Breast epithelium (tissue), 4 donors: ENCODE measurements at regions of chr4 and their contacts with region 1.

Region 1: DNA sequence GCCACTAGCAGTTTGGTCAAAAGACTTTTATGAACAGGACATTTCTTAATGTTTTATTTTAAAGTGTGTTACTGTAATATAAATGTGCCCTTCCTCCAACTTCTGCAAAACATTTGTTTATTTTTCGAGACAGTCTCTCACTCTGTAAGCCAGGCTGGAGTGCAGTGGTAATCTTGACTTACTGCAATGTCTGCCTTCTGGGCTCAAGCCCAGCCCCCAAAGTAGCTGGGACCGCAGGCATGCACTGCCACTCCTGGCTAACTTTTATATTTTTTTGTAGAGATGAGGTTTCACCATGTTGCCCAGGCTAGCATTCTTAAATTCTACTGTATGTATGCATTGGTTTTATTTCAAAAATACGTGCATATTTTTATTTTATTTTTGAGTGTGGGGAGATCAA is 1201.9 kb downstream of the STIM2 start:
- DNase-seq: no peak
- H3K4me3 ChIP-seq: no peak overlapping the region
- H3K27ac ChIP-seq: no peak overlapping the region
- H3K4me1 ChIP-seq: no peaks in the 10 kb centered on the region
- H3K27me3 ChIP-seq: no peaks in the 10 kb centered on the region
- CTCF ChIP-seq: no peak
- POLR2A ChIP-seq: no peak

Region 2: GRCh38 chr4:27616166-27616565 is 446.4 kb before region 1 on chr4:
- intact Hi-C with region 1: no loop called
- DNase-seq: no peak
- H3K4me3 ChIP-seq: no peak overlapping the region
- H3K27ac ChIP-seq: no peak overlapping the region
- H3K4me1 ChIP-seq: no peaks in the 10 kb centered on the region
- H3K27me3 ChIP-seq: no peaks in the 10 kb centered on the region
- CTCF ChIP-seq: no peak
- POLR2A ChIP-seq: no peak

Region 3: GRCh38 chr4:27692158-27692557 is 370.4 kb before region 1 on chr4:
- intact Hi-C with region 1: loop called (anchors 5 kb)
- DNase-seq: no peak
- H3K4me3 ChIP-seq: no peak overlapping the region
- H3K27ac ChIP-seq: no peak overlapping the region
- H3K4me1 ChIP-seq: no peaks in the 10 kb centered on the region
- H3K27me3 ChIP-seq: no peaks in the 10 kb centered on the region
- CTCF ChIP-seq: peak in 1 of 3 donors; percentile 20
- POLR2A ChIP-seq: no peak

Region 4: DNA sequence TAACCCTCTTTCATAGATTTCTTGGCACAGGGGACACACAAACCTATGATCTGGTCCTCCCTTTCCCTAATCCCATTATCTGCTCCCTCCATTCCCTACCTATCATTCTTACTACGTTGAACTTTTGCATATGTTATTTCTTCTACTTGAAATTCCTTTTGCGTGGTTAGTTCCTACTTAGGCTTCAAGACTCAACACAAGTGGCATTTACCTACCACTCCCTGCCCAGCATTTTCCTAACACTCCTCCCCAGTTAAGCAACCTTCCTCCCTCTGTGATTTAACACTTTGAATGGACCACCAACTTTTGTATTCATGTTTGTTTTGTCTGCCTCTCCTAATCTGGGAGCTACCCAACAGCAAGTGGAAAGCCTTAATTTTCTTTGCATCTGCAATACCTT is 88.2 kb before region 1 on chr4:
- intact Hi-C with region 1: no loop called
- DNase-seq: no peak
- H3K4me3 ChIP-seq: no peak overlapping the region
- H3K27ac ChIP-seq: no peak overlapping the region
- H3K4me1 ChIP-seq: no peaks in the 10 kb centered on the region
- H3K27me3 ChIP-seq: no peaks in the 10 kb centered on the region
- CTCF ChIP-seq: no peak
- POLR2A ChIP-seq: no peak

Region 5: GRCh38 chr4:28913466-28913865 is 850.9 kb after region 1 on chr4:
- intact Hi-C with region 1: no loop called
- DNase-seq: no peak
- H3K4me3 ChIP-seq: no peak overlapping the region
- H3K27ac ChIP-seq: no peak overlapping the region
- H3K4me1 ChIP-seq: no peaks in the 10 kb centered on the region
- H3K27me3 ChIP-seq: no peaks in the 10 kb centered on the region
- CTCF ChIP-seq: no peak
- POLR2A ChIP-seq: no peak